Activated CD4-positive, alpha-beta T cell treated with anti-CD3 and anti-CD28 coated beads for 36 hours (primary cell): ENCODE measurements at regions of chr5 and their contacts with region 1.

Region 1: DNA sequence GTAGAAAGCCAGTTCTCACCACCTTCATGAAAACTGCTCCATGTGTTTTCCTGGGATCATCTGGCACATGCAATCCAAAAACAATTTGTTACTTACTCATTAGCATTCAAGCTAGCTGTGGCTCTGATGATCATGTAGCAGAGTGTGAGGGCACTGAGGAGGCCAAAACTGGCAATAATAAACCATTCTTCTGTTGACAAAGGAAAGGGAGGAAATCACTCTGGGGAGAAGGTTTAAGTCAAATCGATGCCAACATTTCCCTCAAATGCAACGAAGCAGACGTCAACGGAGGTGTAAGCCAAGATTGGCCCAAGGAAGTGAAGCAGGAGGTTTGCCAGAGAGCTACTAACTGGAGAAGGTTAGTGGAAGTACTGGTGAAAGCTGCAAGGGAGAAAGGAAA is 55.7 kb upstream of the TBC1D9B start:
- DNase-seq: no peak
- ATAC-seq: no peak
- H3K4me3 Mint-ChIP-seq: no peak overlapping the region
- H3K27ac Mint-ChIP-seq: no peak overlapping the region
- H3K4me1 Mint-ChIP-seq: no peaks in the 10 kb centered on the region
- H3K27me3 Mint-ChIP-seq: no peaks in the 10 kb centered on the region

Region 2: GRCh38 chr5:179906294-179906794 is 57.0 kb before region 1 on chr5:
- CTCF ChIA-PET with region 1: no interaction called
- POLR2A ChIA-PET with region 1: no interaction called
- intact Hi-C with region 1: no loop called
- DNase-seq: peak; percentile 49
- ATAC-seq: no peak
- H3K4me3 Mint-ChIP-seq: peak overlapping the region; percentile 92
- H3K27ac Mint-ChIP-seq: peak overlapping the region; percentile 78
- H3K4me1 Mint-ChIP-seq: peaks cover 13% of the 10 kb centered on the region
- H3K27me3 Mint-ChIP-seq: no peaks in the 10 kb centered on the region

Region 3: GRCh38 chr5:180009581-180009980 is 46.2 kb after region 1 on chr5:
- CTCF ChIA-PET with region 1: no interaction called
- POLR2A ChIA-PET with region 1: no interaction called
- intact Hi-C with region 1: loop called in 1 of 2 experiments (anchors 1 kb)
- DNase-seq: no peak
- ATAC-seq: no peak
- H3K4me3 Mint-ChIP-seq: no peak overlapping the region
- H3K27ac Mint-ChIP-seq: no peak overlapping the region
- H3K4me1 Mint-ChIP-seq: peaks cover 16% of the 10 kb centered on the region
- H3K27me3 Mint-ChIP-seq: no peaks in the 10 kb centered on the region

Region 4: DNA sequence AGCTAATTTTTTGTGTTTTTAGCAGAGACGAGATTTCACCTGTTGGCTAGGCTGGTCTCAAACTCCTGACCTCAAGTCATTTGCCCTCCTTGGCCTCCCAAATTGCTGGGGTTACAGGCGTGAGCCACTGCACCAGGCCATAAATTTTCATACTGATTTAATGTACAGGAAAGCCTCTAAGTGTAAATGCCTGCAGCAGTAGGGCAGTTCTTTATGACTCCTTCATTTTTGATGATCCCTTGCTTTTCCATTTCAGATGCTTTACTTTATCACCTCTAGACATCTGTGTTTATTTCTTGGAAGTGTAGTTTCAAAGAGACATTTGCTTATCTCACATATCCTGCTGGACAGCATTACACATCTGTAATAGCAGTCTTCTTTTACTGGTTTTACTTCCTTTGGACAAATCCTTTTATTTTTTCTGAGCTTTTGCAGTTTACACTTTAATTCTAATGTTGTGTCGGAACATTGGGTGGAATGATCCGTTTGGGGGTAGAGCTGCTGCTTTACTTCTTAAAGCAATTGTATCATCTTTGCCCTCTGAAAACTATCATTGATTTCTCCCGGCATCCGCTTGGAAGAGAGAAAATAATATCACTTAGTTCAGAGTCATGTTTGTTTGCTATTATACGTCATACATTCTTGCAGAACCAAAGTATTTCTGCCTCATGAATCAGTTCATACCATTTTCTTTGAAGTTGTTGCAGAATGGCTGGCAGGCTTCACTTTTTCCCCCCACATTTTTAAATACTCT is 592.0 kb after region 1 on chr5:
- CTCF ChIA-PET with region 1: no interaction called
- POLR2A ChIA-PET with region 1: no interaction called
- intact Hi-C with region 1: no loop called
- DNase-seq: no peak
- ATAC-seq: no peak
- H3K4me3 Mint-ChIP-seq: no peak overlapping the region
- H3K27ac Mint-ChIP-seq: no peak overlapping the region
- H3K4me1 Mint-ChIP-seq: peaks cover 19% of the 10 kb centered on the region
- H3K27me3 Mint-ChIP-seq: no peaks in the 10 kb centered on the region